ENCODE measurements at regions of chr10 and their contacts with region 1.

Region 1: GRCh38 chr10:44310762-44311562 is 73.9 kb downstream of the CXCL12 start:
- DNase-seq: peak; percentile 77 to 82
- ATAC-seq: peak; percentile 75 to 93 (median 92)
- H3K4me3 ChIP-seq: peak overlapping the region; percentile 38
- H3K4me3 Mint-ChIP-seq: peak overlapping the region; percentile 83
- H3K27ac ChIP-seq: peak overlapping the region; percentile 99
- H3K27ac Mint-ChIP-seq: peak overlapping the region; percentile 84 to 92
- H3K4me1 ChIP-seq: peaks cover 33% of the 10 kb centered on the region
- H3K4me1 Mint-ChIP-seq: peaks cover 22 to 31% of the 10 kb centered on the region in 2 donors
- H3K27me3 ChIP-seq: no peaks in the 10 kb centered on the region
- H3K27me3 Mint-ChIP-seq: peaks cover 11 to 12% of the 10 kb centered on the region in 2 donors
- CTCF ChIP-seq: peak; percentile 75

Region 2: GRCh38 chr10:43396928-43397624 is 913.9 kb before region 1 on chr10:
- intact Hi-C with region 1: loop called (anchors 2 kb)
- DNase-seq: peak; percentile 70 to 86
- ATAC-seq: peak; percentile 65 to 84 (median 75)
- H3K4me3 ChIP-seq: peak overlapping the region; percentile 57
- H3K4me3 Mint-ChIP-seq: peak overlapping the region; percentile 97
- H3K27ac ChIP-seq: peak overlapping the region; percentile 85
- H3K27ac Mint-ChIP-seq: peak overlapping the region; percentile 98 to 99
- H3K4me1 ChIP-seq: peaks cover 56% of the 10 kb centered on the region
- H3K4me1 Mint-ChIP-seq: peaks cover 74 to 75% of the 10 kb centered on the region in 2 donors
- H3K27me3 ChIP-seq: no peaks in the 10 kb centered on the region
- H3K27me3 Mint-ChIP-seq: no peaks in the 10 kb centered on the region
- CTCF ChIP-seq: no peak